Heart left ventricle (tissue), 16 donors: ENCODE measurements at regions of chr1 and their contacts with region 1.

Region 1: GRCh38 chr1:89641781-89642180 is 8.9 kb downstream of the LRRC8C start:
- DNase-seq: no peak
- ATAC-seq: no peak
- H3K4me3 ChIP-seq: no peak overlapping the region
- H3K27ac ChIP-seq: no peak overlapping the region
- H3K4me1 ChIP-seq: peaks cover 0 to 56% (median 22%) of the 10 kb centered on the region in 12 donors
- H3K27me3 ChIP-seq: no peaks in the 10 kb centered on the region
- CTCF ChIP-seq: no peak
- POLR2A ChIP-seq: no peak

Region 2: GRCh38 chr1:89566761-89567174 is 75.0 kb before region 1 on chr1:
- intact Hi-C with region 1: no loop called
- DNase-seq: peak; percentile 46 to 68 (median 65)
- ATAC-seq: peak; percentile 83 to 96 (median 92)
- H3K4me3 ChIP-seq: peak overlapping the region in 7 of 12 donors; percentile 4 to 29 (median 13)
- H3K27ac ChIP-seq: peak overlapping the region; percentile 19 to 78 (median 62)
- H3K4me1 ChIP-seq: peaks cover 0 to 27% (median 7%) of the 10 kb centered on the region in 12 donors
- H3K27me3 ChIP-seq: no peaks in the 10 kb centered on the region
- CTCF ChIP-seq: no peak
- POLR2A ChIP-seq: no peak

Region 3: GRCh38 chr1:89692601-89693521 is 51.1 kb after region 1 on chr1:
- intact Hi-C with region 1: loop called in 7 of 10 experiments (anchors 5 to 10 kb)
- DNase-seq: peak in 3 of 5 donors; percentile 39 to 67 (median 47)
- ATAC-seq: peak; percentile 32 to 92 (median 78)
- H3K4me3 ChIP-seq: no peak overlapping the region
- H3K27ac ChIP-seq: peak overlapping the region in 11 of 12 donors; percentile 3 to 81 (median 36)
- H3K4me1 ChIP-seq: peaks cover 9 to 70% (median 62%) of the 10 kb centered on the region in 12 donors
- H3K27me3 ChIP-seq: no peaks in the 10 kb centered on the region
- CTCF ChIP-seq: no peak
- POLR2A ChIP-seq: no peak

Region 4: GRCh38 chr1:89706700-89707012 is 64.9 kb after region 1 on chr1:
- intact Hi-C with region 1: loop called in 1 of 10 experiments (anchors 5 kb)
- DNase-seq: no peak
- ATAC-seq: no peak
- H3K4me3 ChIP-seq: no peak overlapping the region
- H3K27ac ChIP-seq: peak overlapping the region in 2 of 12 donors; percentile 23 to 71
- H3K4me1 ChIP-seq: peaks cover 0 to 45% (median 12%) of the 10 kb centered on the region in 12 donors
- H3K27me3 ChIP-seq: no peaks in the 10 kb centered on the region
- CTCF ChIP-seq: no peak
- POLR2A ChIP-seq: no peak